ENCODE measurements at regions of chr2 and their contacts with region 1.

Region 1: DNA sequence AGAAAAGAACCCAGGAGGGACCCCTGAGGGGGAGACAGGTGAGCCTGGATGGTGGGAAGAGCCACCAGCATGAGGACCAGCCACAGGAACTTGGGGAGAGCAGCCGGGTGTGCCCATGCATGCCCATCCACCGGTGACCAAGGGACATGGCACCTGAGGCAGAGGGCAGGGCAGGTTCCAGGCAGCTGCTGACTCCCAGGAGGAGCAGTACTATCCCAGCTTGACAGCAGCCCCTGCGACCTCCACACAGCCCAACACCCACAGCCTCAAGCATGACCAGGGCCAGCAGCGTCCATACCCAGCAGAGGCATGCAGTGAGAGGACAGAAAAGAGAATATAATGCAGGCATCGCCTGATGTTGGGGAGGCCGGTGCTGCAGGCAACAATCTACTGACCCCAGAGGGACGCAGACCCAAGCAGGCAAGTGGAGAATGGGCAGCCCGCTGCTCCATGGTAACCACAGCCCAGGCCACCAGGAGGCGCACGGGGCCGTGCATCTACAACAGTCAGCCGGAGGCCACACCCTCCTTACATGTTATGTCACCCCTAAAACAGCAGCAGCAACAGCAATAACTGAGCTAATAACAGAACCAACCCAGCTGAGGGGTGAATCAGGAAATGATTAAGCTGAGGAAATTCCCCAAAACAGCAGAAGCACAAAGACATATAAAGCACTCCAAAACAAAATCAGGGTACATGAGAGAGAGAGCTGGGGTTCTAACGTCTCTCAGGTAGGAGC is 44.1 kb downstream of the ANKMY1 start:
- DNase-seq: peak; percentile 68
- H3K4me3 ChIP-seq: no peak overlapping the region
- H3K27ac ChIP-seq: no peak overlapping the region
- H3K27me3 ChIP-seq: no peaks in the 10 kb centered on the region
- CTCF ChIP-seq: peak; percentile 97

Region 2: GRCh38 chr2:240198226-240198625 is 315.5 kb before region 1 on chr2:
- CTCF ChIA-PET with region 1: no interaction called
- POLR2A ChIA-PET with region 1: no interaction called
- DNase-seq: no peak
- H3K4me3 ChIP-seq: no peak overlapping the region
- H3K27ac ChIP-seq: no peak overlapping the region
- H3K27me3 ChIP-seq: peaks cover 39% of the 10 kb centered on the region
- CTCF ChIP-seq: no peak

Region 3: GRCh38 chr2:240524963-240525718 is 11.4 kb after region 1 on chr2:
- CTCF ChIA-PET with region 1: interaction called, 10 read pairs
- POLR2A ChIA-PET with region 1: no interaction called
- DNase-seq: no peak
- H3K4me3 ChIP-seq: no peak overlapping the region
- H3K27ac ChIP-seq: no peak overlapping the region
- H3K27me3 ChIP-seq: no peaks in the 10 kb centered on the region
- CTCF ChIP-seq: no peak

Region 4: DNA sequence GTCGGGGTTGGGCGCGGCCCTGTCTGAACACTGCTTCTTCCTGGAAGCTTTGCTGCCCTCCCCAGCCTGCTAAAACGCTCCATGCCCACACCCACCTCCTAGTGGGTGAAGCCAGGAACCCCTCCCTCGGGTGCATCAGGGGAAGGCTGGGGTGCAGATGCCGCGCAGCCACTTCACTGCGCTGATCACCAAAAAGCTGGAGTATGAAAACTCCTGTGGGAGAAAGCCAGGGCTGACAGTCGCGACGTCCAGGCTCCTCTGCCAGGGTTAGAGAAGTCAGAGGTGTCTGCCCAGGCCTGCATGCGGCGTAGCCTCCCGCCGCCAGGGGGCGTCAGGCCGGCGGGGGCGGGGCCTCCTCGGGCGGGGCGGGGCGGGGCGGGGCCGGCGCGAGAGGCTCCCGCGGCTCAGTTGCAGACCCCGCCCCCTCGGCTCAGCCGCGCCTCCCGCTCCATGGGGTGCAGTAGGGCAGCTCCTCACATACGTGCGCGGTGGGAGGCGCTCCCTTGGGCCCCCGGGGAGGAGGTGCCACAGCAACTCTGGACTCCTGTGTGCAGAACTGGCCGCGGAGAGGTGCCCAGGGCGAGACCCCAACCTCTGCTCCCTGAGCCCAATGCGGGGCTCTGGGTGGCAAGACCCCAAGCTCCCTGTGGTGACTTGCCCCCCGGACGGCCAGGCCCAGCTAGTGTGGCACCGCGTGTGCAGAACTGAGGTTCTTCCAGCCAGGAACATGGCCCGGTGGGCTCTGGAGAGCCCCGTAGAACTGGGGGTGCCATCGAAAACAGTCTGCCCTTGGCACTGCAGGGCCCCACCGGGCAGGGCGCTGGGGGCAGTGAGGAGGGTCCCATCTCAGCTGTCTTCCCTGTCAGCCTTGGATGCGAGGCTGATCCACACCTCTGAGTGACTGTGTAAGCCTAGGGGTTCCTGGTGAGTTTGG is 52.8 kb after region 1 on chr2:
- CTCF ChIA-PET with region 1: interaction called, 17 read pairs
- POLR2A ChIA-PET with region 1: interaction called, 3 read pairs
- DNase-seq: no peak
- H3K4me3 ChIP-seq: peak overlapping the region; percentile 76
- H3K27ac ChIP-seq: peak overlapping the region; percentile 89
- H3K27me3 ChIP-seq: no peaks in the 10 kb centered on the region
- CTCF ChIP-seq: peak; percentile 66

Region 5: GRCh38 chr2:240604291-240604938 is 90.7 kb after region 1 on chr2:
- CTCF ChIA-PET with region 1: interaction called, 11 read pairs
- POLR2A ChIA-PET with region 1: no interaction called
- DNase-seq: no peak
- H3K4me3 ChIP-seq: no peak overlapping the region
- H3K27ac ChIP-seq: no peak overlapping the region
- H3K27me3 ChIP-seq: no peaks in the 10 kb centered on the region
- CTCF ChIP-seq: peak; percentile 57